IMR-90 (cell line): ENCODE measurements at regions of chr5 and their contacts with region 1.

Region 1: DNA sequence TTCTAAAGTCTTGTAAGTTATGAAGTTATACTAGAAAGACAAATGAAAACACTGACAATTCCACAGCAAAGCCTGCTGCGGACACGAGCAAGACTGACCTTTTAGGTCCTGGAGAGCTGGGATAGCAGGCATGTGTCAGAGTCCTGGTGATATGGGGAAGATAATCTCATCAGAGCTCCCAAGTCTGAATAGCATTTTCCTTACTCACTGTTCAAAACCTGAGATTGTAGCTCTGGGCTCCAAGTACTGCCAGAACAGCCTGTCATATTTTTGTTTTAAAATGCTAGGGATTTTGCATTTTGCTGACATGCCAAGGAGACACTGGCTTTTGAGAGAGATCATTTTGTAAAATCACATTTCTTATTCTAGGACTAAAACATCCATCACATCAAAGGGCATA is 90.1 kb downstream of the DRD1 start:
- DNase-seq: peak; percentile 64
- ATAC-seq: peak; percentile 70
- H3K4me3 ChIP-seq: no peak overlapping the region
- H3K27ac ChIP-seq: no peak overlapping the region
- H3K4me1 ChIP-seq: no peaks in the 10 kb centered on the region; the same call in 1 of the 2 replicates
- H3K27me3 ChIP-seq: no peaks in the 10 kb centered on the region
- CTCF ChIP-seq: no peak
- POLR2A ChIP-seq: no peak
- RAD21 ChIP-seq: no peak

Region 2: GRCh38 chr5:174998131-174998730 is 355.7 kb before region 1 on chr5:
- CTCF ChIA-PET with region 1: no interaction called
- POLR2A ChIA-PET with region 1: no interaction called
- dilution Hi-C with region 1: no loop called
- in situ Hi-C with region 1: no loop called
- intact Hi-C with region 1: no loop called
- DNase-seq: no peak
- ATAC-seq: no peak
- H3K4me3 ChIP-seq: no peak overlapping the region
- H3K27ac ChIP-seq: no peak overlapping the region
- H3K4me1 ChIP-seq: no peaks in the 10 kb centered on the region
- H3K27me3 ChIP-seq: no peaks in the 10 kb centered on the region
- CTCF ChIP-seq: no peak
- POLR2A ChIP-seq: no peak
- RAD21 ChIP-seq: no peak

Region 3: GRCh38 chr5:175377816-175378215 is 23.9 kb after region 1 on chr5:
- CTCF ChIA-PET with region 1: interaction called, 3 read pairs
- POLR2A ChIA-PET with region 1: interaction called, 19 read pairs
- dilution Hi-C with region 1: no loop called
- in situ Hi-C with region 1: no loop called
- intact Hi-C with region 1: no loop called
- DNase-seq: no peak
- ATAC-seq: no peak
- H3K4me3 ChIP-seq: no peak overlapping the region
- H3K27ac ChIP-seq: no peak overlapping the region
- H3K4me1 ChIP-seq: peaks cover 3% of the 10 kb centered on the region; the same call in 1 of the 2 replicates
- H3K27me3 ChIP-seq: no peaks in the 10 kb centered on the region
- CTCF ChIP-seq: no peak
- POLR2A ChIP-seq: no peak
- RAD21 ChIP-seq: no peak

Region 4: DNA sequence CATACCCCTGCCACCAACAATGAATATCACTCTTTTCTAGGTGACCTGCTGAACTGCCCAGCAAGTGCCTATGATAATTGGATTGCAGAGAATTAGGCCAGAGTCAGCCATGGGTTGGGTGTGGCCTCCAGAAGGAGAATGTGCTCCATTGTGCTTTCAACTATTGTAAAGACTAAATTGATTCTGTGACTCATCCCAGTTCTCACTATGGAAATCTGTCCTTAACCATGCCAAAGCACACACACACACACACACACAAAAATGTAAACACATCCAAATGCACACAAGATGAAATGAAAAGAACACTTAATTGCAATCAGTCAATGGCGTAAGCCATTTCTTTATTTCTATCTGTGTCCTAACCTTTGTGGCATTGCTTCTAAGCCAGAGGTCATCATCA is 64.4 kb after region 1 on chr5:
- CTCF ChIA-PET with region 1: no interaction called
- POLR2A ChIA-PET with region 1: no interaction called
- dilution Hi-C with region 1: no loop called
- in situ Hi-C with region 1: no loop called
- intact Hi-C with region 1: no loop called
- DNase-seq: no peak
- ATAC-seq: no peak
- H3K4me3 ChIP-seq: no peak overlapping the region
- H3K27ac ChIP-seq: no peak overlapping the region
- H3K4me1 ChIP-seq: no peaks in the 10 kb centered on the region
- H3K27me3 ChIP-seq: peaks cover under 1% of the 10 kb centered on the region; the same call in 1 of the 2 replicates
- CTCF ChIP-seq: no peak
- POLR2A ChIP-seq: no peak
- RAD21 ChIP-seq: no peak